Heart right ventricle (tissue), 16 donors: ENCODE measurements at regions of chr4 and their contacts with region 1.

Region 1: GRCh38 chr4:15649914-15650545 is 5.1 kb downstream of the FBXL5 start:
- DNase-seq: peak in 1 of 2 donors; percentile 51
- ATAC-seq: peak in 7 of 8 donors; percentile 40 to 73 (median 64)
- H3K4me3 ChIP-seq: no peak overlapping the region
- H3K27ac ChIP-seq: peak overlapping the region in 5 of 10 donors; percentile 0 to 100 (median 14)
- H3K4me1 ChIP-seq: peaks cover 4 to 88% (median 75%) of the 10 kb centered on the region in 9 donors
- H3K27me3 ChIP-seq: no peaks in the 10 kb centered on the region
- CTCF ChIP-seq: peak; percentile 26 to 79 (median 64)

Region 2: DNA sequence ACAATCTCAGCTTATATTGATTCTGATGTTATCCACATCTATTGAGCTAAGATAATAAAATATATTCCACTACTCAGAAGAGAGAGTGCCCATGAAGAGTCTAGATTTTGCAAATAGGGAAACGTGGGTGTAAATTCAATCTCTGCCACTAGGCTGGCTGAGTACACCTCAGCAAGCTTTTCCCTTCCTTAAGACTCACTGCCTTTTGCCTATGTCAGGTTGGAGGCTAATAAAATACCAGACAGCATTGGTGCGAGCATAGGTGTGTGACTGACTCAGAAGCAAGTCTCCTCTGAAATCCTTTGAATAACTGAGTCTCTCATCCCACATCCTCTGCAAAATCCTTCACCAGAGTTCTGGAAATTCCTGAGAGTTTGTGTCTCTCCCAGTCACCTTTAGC is 1053.1 kb before region 1 on chr4:
- intact Hi-C with region 1: no loop called
- DNase-seq: no peak
- ATAC-seq: no peak
- H3K4me3 ChIP-seq: no peak overlapping the region
- H3K27ac ChIP-seq: no peak overlapping the region
- H3K4me1 ChIP-seq: peaks cover 0 to 10% (median 0%) of the 10 kb centered on the region in 9 donors
- H3K27me3 ChIP-seq: no peaks in the 10 kb centered on the region
- CTCF ChIP-seq: peak in 1 of 9 donors; percentile 6

Region 3: DNA sequence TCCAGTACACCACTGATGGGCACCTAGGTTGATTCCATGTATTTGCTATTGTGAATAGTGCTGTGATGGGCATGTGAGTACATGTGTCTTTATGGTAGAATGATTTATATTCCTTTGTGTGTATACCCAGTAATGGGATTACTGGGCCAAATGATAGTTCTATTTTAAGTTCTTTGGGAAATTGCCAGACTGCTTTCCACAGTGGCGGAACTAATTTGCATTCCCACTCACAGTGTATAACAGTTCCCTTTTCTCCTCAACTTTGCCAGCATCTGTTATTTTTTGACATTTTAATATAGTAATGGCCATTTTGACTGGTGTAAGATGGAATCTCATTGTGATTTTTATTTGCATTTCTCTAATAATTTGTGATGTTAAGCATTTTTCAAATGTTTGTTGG is 154.4 kb before region 1 on chr4:
- intact Hi-C with region 1: loop called in 1 of 10 experiments (anchors 10 kb)
- DNase-seq: no peak
- ATAC-seq: peak in 4 of 8 donors; percentile 19 to 57 (median 47)
- H3K4me3 ChIP-seq: no peak overlapping the region
- H3K27ac ChIP-seq: no peak overlapping the region
- H3K4me1 ChIP-seq: peaks cover 0 to 23% (median 10%) of the 10 kb centered on the region in 9 donors
- H3K27me3 ChIP-seq: no peaks in the 10 kb centered on the region
- CTCF ChIP-seq: no peak